Calu3 (cell line): ENCODE measurements at regions of chr7 and their contacts with region 1.

Region 1: DNA sequence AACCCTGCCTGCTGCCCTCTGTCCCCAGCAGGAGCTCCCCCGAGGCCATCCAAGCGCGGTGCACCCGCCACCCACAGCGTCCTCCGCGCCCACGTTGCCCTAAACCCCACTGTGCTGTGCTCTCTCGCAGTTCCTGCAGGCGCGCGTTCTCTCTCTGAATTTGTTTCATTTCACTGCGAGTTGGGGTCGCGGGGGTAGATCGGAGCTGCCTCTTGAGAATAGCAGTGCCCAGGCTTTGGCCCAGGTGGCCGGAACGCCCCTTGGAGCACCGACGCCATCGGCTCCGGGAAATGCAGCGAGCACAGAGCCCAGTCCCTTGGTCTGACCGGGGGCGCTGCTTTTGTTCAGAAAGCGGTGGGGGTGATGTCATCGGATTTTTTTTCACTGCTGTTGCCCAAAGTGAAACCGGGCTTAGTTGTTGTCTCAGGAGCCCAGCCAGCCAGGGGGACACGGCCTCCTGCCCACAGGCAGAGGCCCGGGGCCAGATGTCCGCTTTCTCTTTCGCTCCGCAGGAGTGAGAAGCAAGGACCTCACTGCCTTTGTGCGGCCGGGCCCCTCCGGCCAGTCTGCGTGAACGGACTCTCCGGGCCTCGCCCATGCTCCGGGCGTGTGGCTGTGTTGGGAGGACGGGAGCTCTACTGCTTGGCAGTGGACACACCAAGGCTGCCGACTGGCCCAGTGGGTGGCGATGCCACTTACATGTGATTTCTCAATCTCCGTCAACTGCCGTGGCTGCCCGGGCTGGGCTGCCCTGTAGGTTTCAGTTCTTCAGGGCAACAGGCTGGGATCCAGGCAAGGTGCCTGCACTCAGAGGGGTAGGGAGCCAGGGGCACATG is 43.1 kb downstream of the FOXK1 start:
- DNase-seq: peak; percentile 79
- H3K4me3 Mint-ChIP-seq: peak overlapping the region; percentile 82
- H3K27ac Mint-ChIP-seq: peak overlapping the region; percentile 84
- H3K4me1 Mint-ChIP-seq: peaks cover 24% of the 10 kb centered on the region
- H3K27me3 Mint-ChIP-seq: no peaks in the 10 kb centered on the region
- CTCF ChIP-seq: peak; percentile 29

Region 2: GRCh38 chr7:4681886-4682620 is 43.2 kb before region 1 on chr7 and contains the start of gene FOXK1:
- CTCF ChIA-PET with region 1: interaction called, 10 read pairs
- intact Hi-C with region 1: no loop called
- DNase-seq: peak; percentile 93
- H3K4me3 Mint-ChIP-seq: peak within 1 kb of the TSS; percentile 82
- H3K27ac Mint-ChIP-seq: peak within 1 kb of the TSS; percentile 89
- H3K4me1 Mint-ChIP-seq: peaks cover 13% of the 10 kb centered on the region
- H3K27me3 Mint-ChIP-seq: peaks cover 13% of the 10 kb centered on the region
- CTCF ChIP-seq: no peak
- total RNA-seq, gene FOXK1: 65.9 and 67.1 TPM in 2 replicates

Region 3: GRCh38 chr7:4712281-4713182 is 12.7 kb before region 1 on chr7:
- CTCF ChIA-PET with region 1: interaction called, 10 read pairs
- intact Hi-C with region 1: no loop called
- DNase-seq: peak; percentile 31
- H3K4me3 Mint-ChIP-seq: no peak overlapping the region
- H3K27ac Mint-ChIP-seq: no peak overlapping the region
- H3K4me1 Mint-ChIP-seq: peaks cover 20% of the 10 kb centered on the region
- H3K27me3 Mint-ChIP-seq: no peaks in the 10 kb centered on the region
- CTCF ChIP-seq: no peak

Region 4: DNA sequence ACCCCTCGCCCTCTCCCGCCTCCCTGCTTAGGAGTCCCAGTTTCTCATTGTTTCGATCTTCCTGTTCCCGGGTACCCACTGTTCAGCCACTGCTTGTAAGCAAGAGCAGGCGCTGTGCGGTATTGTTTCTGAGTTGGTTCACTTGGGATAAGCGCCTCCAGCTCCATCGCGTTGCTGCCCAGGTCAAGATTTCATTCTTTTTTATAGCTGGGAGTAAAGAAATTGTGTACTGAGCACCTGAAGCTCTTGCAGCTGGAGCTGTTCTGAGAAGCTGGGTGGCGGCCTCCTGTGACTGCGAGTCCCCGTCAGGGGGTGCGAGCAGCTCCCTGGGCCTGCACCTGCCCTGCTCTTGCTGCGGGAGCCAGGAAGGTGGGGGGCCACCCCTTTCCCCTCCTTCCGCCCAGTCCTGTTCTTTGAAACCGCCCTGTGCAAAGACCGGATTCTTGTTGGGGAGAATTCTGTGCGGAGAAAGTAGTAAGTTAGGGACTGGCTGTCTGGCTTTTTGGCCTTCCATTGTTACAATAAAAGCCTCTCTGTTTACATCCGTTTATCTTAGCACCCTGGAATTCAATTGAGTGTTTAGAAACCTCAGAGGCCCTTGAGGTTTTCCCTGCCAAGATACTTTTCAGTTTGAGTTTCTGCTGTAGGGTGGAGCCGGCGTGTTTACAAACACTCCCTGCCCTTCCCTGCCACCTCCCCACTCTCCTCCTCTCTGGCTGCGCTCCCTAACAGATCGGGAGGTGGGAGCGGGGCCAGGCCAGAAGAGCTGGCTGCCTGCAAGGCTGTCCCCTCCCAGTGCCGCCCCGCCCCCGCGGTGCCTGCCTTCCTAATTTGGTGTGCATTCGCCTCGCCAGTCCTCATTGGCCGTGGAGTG is 19.4 kb after region 1 on chr7:
- CTCF ChIA-PET with region 1: interaction called, 16 read pairs
- intact Hi-C with region 1: no loop called
- DNase-seq: peak; percentile 100
- H3K4me3 Mint-ChIP-seq: peak overlapping the region; percentile 66
- H3K27ac Mint-ChIP-seq: peak overlapping the region; percentile 70
- H3K4me1 Mint-ChIP-seq: peaks cover 53% of the 10 kb centered on the region
- H3K27me3 Mint-ChIP-seq: no peaks in the 10 kb centered on the region
- CTCF ChIP-seq: no peak